Left lung (tissue), 14 donors: ENCODE measurements at regions of chr1 and their contacts with region 1.

Region 1: DNA sequence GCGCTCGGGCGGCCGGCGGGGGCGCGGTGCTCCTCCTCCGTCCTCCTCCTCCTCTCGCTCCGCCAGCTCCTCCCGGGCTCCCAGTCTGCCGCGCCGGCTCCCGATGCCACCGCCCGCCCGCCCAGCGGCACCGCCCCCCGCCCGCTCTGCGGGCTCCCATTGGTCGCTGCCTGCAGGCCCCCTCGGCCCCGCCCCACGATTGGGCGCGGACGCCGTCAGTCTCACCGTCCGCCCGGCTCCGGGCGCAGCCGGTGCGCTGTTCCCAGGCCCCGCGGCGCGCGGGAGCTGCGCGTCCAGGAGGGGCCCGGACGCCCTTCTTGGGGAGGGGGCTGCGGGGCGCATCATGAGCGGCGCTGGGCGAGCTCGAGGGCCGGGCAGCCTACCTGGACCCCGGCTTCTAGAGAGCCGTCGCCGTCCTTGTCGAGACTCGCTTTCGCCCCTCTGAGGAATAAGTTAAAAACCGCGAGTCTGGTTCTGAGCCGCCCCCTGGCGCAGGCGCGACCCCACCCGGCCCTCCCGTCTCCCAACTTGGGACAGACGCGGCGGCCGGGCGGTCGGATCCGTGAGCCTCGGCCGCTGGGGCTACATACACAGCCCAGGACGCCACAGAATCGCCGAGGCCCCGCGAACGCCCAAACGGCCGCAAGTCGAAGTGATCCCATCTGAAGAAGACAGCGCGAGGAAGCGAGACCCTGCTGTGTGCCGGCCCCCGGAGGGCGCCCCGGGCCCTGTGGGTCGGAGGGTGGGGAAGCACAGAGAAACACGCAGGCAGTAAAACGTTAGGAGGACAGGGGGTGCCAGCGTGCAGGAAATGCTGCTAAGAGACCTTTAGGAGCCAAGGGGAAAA is at the start of gene SIPA1L2:
- DNase-seq: peak; percentile 95 to 98 (median 96)
- ATAC-seq: peak; percentile 96
- H3K4me3 ChIP-seq: peak within 1 kb of the TSS; percentile 86 to 90
- H3K27ac ChIP-seq: peak within 1 kb of the TSS; percentile 85 to 93
- H3K4me1 ChIP-seq: peaks cover 8 to 59% of the 10 kb centered on the region in 2 donors
- H3K27me3 ChIP-seq: peaks cover 0 to 27% of the 10 kb centered on the region in 2 donors
- CTCF ChIP-seq: peak in 1 of 2 donors; percentile 24
- polyA plus RNA-seq, gene SIPA1L2: 23.7 to 29.3 (median 26.9) TPM

Region 2: DNA sequence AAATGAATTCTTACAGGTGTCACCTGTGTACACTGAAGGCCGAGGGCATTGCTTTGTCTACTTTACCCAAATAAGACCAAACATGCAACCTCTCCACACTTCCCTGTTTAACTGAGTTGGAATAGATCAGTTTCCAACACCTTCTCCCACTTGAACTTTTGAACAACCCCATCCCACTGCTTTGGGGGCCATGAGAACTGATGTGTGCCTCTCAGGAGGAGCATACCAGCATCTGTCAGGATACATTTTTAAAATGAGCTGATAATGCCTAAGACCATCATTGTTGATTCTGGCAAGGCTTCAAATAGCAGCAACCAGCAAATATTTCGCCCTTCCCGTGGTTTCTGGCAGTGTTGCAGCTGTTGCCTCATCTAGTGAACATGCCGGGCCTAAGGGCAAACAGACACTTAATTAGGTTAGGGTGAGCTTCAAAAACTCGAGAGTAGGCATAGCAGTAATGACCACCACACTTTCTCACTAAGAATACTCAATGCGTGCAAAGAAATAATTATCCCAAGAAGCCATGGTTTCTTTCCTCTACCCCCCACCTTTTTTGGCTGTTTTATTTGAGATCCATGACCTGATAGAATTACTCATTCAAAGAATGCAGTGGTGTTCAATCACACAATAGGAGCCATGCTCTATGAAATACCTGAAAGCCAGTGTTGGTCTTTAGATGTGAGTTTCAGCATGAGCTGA is 238.7 kb after region 1 on chr1:
- intact Hi-C with region 1: no loop called
- DNase-seq: peak in 2 of 4 donors; percentile 56 to 69
- ATAC-seq: peak; percentile 27
- H3K4me3 ChIP-seq: no peak overlapping the region
- H3K27ac ChIP-seq: no peak overlapping the region
- H3K4me1 ChIP-seq: no peaks in the 10 kb centered on the region
- H3K27me3 ChIP-seq: no peaks in the 10 kb centered on the region
- CTCF ChIP-seq: no peak

Region 3: DNA sequence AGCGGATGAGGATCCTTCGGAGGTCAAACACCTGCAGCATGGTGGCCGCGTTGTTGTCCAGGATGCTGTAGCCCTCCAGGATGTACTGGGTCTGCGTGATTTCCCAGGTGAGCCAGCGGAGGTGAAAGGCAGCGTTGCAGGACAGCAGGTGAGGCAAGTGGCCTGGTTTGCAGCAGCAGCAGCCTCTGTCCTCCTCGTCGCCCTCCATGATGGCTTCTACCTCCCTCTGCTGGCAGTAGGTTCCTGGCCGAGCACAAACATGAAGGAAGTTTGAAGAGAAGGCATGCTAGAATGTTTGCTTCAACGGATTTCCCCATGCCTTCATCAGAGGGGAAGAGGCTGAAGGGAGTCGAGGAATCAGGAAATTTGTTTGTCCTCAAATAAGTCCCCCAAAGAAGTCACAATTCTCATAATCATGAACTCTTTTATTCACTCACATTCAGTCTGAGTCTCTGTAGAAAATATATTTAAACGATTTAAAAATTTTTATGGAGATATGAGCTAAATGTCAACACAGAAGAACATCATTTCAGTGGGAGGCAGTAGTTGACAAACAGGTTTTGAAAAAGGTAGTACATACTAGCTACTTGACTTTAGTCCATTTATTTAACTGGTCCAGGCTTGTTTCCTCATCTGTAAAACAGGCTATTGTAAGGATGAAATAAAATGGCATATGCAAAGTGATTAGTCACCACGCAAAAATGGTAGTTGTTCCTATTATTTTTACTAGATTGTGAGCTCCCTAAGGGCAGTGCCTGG is 395.1 kb after region 1 on chr1:
- intact Hi-C with region 1: loop called in 1 of 2 experiments (anchors 10 kb)
- DNase-seq: peak in 2 of 4 donors; percentile 38 to 49
- ATAC-seq: peak; percentile 75
- H3K4me3 ChIP-seq: no peak overlapping the region
- H3K27ac ChIP-seq: no peak overlapping the region
- H3K4me1 ChIP-seq: no peaks in the 10 kb centered on the region
- H3K27me3 ChIP-seq: no peaks in the 10 kb centered on the region
- CTCF ChIP-seq: peak; percentile 10 to 32

Region 4: GRCh38 chr1:233172227-233172626 is 542.0 kb after region 1 on chr1:
- intact Hi-C with region 1: loop called in 1 of 2 experiments (anchors 10 kb)
- DNase-seq: peak in 2 of 4 donors; percentile 2 to 47
- ATAC-seq: peak; percentile 18
- H3K4me3 ChIP-seq: no peak overlapping the region
- H3K27ac ChIP-seq: no peak overlapping the region
- H3K4me1 ChIP-seq: no peaks in the 10 kb centered on the region
- H3K27me3 ChIP-seq: no peaks in the 10 kb centered on the region
- CTCF ChIP-seq: peak; percentile 18 to 26

Region 5: DNA sequence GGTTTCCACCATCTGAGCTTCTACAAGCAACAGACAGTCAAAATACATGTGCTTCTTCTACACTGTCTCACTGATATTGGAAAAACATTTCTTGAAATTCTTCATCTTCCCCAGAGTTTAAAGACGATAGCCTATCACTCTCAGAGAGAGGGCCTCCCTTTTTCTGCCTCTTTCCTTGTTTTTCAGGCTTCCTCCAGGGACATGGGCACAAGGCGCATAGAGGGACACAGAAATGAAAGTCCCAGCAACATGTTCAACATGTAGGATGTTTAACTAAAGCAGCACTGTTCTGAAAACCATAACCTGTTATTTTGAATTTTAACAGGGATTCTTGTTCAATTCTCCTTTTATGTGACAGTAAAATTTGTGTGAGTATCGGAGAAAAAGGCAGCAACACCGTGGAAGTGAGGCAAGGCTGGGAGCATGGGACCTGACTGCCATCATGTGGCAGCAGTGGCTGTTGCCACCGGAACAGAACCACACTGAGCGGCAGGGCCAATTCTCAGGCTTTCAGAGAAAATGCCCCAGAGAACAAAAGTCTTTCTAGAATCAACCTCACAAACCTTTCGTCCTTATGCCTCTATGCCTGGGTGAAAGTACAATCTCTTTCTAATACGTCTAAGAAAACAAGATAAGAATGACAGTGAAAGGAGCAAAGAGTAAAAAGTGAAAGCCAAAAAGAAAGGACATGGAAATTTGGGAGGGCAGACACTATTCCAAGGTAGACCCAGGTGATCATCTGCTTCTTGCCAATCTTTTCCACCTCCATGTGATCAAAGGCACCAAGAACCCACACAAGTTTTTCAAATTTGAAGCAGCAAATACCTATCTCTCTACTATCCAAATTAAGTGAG is 610.8 kb after region 1 on chr1:
- intact Hi-C with region 1: loop called in 1 of 2 experiments (anchors 10 kb)
- DNase-seq: peak; percentile 54 to 84 (median 71)
- ATAC-seq: peak; percentile 96
- H3K4me3 ChIP-seq: peak overlapping the region in 1 of 2 donors; percentile 2
- H3K27ac ChIP-seq: no peak overlapping the region
- H3K4me1 ChIP-seq: peaks cover 0 to 32% of the 10 kb centered on the region in 2 donors
- H3K27me3 ChIP-seq: no peaks in the 10 kb centered on the region
- CTCF ChIP-seq: peak; percentile 72 to 74